ENCODE measurements at regions of chr22 and their contacts with region 1.

Region 1: GRCh38 chr22:42697542-42698013 is 23.1 kb downstream of the A4GALT start:
- DNase-seq: no peak
- H3K4me3 ChIP-seq: no peak overlapping the region
- H3K27ac ChIP-seq: peak overlapping the region; percentile 74
- H3K4me1 ChIP-seq: peaks cover 90% of the 10 kb centered on the region
- CTCF ChIP-seq: no peak

Region 2: GRCh38 chr22:42760806-42761565 is 63.4 kb after region 1 on chr22:
- CTCF ChIA-PET with region 1: no interaction called
- POLR2A ChIA-PET with region 1: interaction called, 8 read pairs
- intact Hi-C with region 1: loop called (anchors 1 kb)
- DNase-seq: peak; percentile 95
- H3K4me3 ChIP-seq: peak overlapping the region; percentile 33
- H3K27ac ChIP-seq: peak overlapping the region; percentile 95
- H3K4me1 ChIP-seq: peaks cover 72% of the 10 kb centered on the region
- CTCF ChIP-seq: no peak

Measured in OCI-LY7 (cell line).